GM10248 (cell line): ENCODE measurements at regions of chr11 and their contacts with region 1.

Region 1: GRCh38 chr11:43261775-43262174 is 50.0 kb upstream of the API5 start:
- DNase-seq: no peak
- CTCF ChIP-seq: no peak

Region 2: DNA sequence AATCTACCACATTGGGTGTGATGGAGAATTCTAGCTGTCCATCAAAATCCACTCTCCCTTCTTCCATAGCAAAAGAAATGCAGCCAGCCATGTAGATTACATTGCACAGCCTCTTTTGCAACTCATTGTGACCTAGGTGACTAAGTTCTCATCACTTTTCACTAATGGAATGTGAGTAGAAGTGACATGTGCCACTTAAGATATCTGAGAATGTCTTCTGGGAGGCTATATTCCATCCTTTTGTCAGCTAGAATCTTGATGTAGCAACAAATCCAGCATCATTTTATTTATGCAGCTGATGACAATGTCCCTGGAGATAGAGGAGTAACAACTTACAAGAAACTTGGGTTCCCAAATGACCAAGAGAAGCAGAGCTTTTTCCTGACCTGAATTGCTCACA is 11.5 kb before region 1 on chr11:
- CTCF ChIA-PET with region 1: interaction called, 10 read pairs
- POLR2A ChIA-PET with region 1: no interaction called
- DNase-seq: no peak
- CTCF ChIP-seq: no peak